A673 (cell line): ENCODE measurements at regions of chr5 and their contacts with region 1.

Region 1: DNA sequence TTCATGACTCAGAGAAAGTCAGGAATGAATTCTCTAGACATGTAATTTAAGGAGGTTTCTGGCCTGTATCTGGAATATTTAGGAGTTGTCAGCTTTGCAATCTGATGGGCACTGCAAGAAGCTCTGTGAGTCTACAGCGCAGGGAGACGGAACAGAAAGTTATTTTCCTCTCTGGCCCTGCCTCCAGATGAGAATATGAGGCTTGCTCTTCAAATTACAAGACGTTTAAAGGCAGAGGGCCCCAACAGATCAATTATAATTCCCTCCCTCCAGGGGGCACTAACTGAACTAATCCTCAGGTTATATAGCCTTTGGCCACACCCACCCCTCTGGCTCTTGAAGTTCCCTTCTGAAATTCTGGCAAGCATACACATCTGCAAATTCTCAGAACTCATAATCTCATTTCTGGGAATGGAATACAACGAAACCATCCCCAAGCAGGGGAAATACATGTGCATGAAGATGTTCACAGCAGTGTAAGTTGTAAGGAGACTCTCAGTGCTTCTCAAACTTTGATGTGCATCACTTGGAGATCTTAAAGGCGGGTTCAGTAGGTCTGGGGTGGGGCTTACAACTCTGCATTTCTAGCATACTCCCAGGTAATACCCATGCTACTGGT is 307.6 kb downstream of the CWC27 start:
- DNase-seq: peak; percentile 95
- H3K4me3 ChIP-seq: no peak overlapping the region
- H3K27ac ChIP-seq: peak overlapping the region; percentile 87
- H3K4me1 ChIP-seq: peaks cover 53% of the 10 kb centered on the region
- H3K27me3 ChIP-seq: no peaks in the 10 kb centered on the region
- CTCF ChIP-seq: peak; percentile 55

Region 2: DNA sequence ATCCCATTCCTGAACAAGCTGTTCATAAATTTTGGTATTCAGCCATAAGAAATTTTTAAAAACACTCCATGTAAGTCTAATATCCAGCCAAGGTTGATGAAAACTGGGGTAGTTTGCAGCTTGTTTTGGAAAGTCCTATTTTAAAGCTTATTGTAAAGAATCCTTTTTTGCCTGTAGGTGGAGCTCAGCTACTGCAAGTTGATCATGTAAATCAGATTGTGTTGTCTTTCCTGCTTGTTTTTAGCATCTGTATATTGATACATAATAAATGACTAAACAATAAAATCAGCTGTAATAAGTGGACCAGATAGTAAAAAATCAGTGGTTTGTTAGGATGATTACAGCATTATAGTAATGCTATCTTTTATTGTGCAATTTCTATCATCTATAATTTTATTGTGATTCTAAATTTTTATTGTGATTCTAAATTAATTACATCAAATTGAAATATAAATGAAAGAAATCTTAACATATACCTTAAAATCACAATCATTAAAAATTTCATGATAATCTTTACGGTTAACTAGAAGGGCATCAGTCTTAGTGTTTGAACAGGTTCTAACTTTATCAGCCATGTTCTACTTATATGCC is 265.2 kb before region 1 on chr5:
- CTCF ChIA-PET with region 1: no interaction called
- POLR2A ChIA-PET with region 1: no interaction called
- intact Hi-C with region 1: loop called (anchors 10 kb)
- DNase-seq: peak; percentile 69
- H3K4me3 ChIP-seq: no peak overlapping the region
- H3K27ac ChIP-seq: no peak overlapping the region
- H3K4me1 ChIP-seq: no peaks in the 10 kb centered on the region
- H3K27me3 ChIP-seq: no peaks in the 10 kb centered on the region
- CTCF ChIP-seq: peak; percentile 75

Region 3: DNA sequence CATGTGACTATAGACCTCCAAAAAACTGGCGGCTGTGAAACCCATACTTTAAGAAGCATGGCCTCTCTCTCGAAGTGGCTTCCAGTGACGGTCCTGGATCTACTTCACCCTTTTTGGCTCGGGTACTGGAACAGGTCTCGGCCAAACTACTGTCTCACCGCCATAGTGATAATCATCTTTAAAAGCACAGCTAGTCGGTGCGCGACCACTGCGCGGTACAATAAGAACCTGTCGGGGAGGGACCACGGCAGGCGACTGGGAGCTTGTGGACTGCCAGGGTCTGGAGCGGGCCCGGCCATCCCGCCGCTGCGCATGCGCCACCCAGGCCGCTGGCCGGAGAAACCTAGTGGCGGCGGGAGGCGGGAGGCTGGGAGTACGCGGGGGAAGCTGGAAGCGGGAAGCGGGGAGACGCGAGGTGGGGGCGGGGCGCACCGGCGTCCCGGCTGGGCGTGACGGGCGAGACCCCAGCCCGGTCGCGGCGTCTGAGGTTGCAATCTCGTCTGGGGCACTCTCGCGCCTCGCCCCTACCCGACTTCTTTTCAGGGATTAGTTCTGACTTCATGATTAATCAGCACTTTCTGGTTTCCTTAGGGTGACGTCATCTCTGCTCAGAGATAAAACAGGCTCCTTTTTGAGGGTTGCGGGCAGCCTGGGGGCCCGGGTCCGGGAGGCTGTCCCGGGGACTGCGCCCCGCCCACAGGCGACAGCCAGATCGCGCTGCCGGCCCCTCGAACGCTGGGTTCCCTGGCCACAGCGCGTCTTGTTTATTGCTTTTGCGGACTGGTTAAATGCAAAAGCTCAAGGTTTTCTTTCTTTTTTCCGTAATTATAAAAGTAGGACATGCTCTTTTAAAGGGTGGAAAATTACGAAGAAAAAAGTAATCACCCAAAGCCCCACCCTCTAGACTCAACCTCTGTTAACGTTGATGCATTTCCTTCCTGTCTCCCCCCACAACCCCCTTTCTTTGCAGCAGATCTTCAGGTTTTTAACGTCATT is 40.9 kb before region 1 on chr5:
- CTCF ChIA-PET with region 1: no interaction called
- POLR2A ChIA-PET with region 1: no interaction called
- intact Hi-C with region 1: loop called (anchors 5 kb)
- DNase-seq: peak; percentile 87
- H3K4me3 ChIP-seq: peak overlapping the region; percentile 57
- H3K27ac ChIP-seq: peak overlapping the region; percentile 76
- H3K4me1 ChIP-seq: peaks cover 11% of the 10 kb centered on the region
- H3K27me3 ChIP-seq: no peaks in the 10 kb centered on the region
- CTCF ChIP-seq: no peak